Right ventricle myocardium inferior (tissue), 1 donor: ENCODE measurements at regions of chr10 and their contacts with region 1.

Region 1: GRCh38 chr10:128263891-128264688 is 137.9 kb upstream of the MKI67 start:
- DNase-seq: no peak
- ATAC-seq: peak; percentile 50

Region 2: GRCh38 chr10:128419466-128420019 is 155.5 kb after region 1 on chr10:
- intact Hi-C with region 1: loop called (anchors 5 kb)
- DNase-seq: no peak
- ATAC-seq: no peak

Region 3: GRCh38 chr10:128429835-128430513 is 165.9 kb after region 1 on chr10:
- intact Hi-C with region 1: no loop called
- DNase-seq: no peak
- ATAC-seq: no peak

Region 4: DNA sequence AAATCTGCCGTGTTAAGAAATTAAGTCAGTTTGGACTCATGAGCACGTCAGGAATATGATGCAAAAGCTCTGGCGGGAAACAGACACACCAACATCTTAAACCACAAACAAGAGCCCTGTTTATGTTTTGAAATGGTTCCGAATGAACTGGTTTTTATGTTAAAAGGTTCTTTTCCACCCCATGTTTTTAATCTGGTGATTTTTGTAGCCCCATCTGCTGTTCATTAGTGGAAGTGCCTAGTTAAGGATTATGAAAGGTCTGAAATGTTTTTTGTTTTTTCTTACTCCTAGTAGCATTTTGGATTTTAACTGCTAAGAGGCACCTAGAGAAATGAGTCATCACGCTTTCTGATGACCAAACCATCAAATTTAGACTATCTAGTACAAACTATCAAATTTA is 266.2 kb after region 1 on chr10:
- intact Hi-C with region 1: loop called (anchors 5 kb)
- DNase-seq: no peak
- ATAC-seq: no peak

Region 5: GRCh38 chr10:129971381-129972144 is 1707.5 kb after region 1 on chr10:
- intact Hi-C with region 1: loop called (anchors 10 kb)
- DNase-seq: peak; percentile 77
- ATAC-seq: peak; percentile 88